AG04449 (cell line): ENCODE measurements at regions of chr7 and their contacts with region 1.

Region 1: GRCh38 chr7:130069978-130070860 is at the start of gene KLHDC10:
- DNase-seq: peak; percentile 96
- H3K4me3 ChIP-seq: peak within 1 kb of the TSS; percentile 77
- CTCF ChIP-seq: no peak

Region 2: GRCh38 chr7:130084037-130084875 is 14.0 kb after region 1 on chr7:
- CTCF ChIA-PET with region 1: interaction called, 44 read pairs
- POLR2A ChIA-PET with region 1: no interaction called
- DNase-seq: no peak
- H3K4me3 ChIP-seq: no peak overlapping the region
- CTCF ChIP-seq: no peak

Region 3: DNA sequence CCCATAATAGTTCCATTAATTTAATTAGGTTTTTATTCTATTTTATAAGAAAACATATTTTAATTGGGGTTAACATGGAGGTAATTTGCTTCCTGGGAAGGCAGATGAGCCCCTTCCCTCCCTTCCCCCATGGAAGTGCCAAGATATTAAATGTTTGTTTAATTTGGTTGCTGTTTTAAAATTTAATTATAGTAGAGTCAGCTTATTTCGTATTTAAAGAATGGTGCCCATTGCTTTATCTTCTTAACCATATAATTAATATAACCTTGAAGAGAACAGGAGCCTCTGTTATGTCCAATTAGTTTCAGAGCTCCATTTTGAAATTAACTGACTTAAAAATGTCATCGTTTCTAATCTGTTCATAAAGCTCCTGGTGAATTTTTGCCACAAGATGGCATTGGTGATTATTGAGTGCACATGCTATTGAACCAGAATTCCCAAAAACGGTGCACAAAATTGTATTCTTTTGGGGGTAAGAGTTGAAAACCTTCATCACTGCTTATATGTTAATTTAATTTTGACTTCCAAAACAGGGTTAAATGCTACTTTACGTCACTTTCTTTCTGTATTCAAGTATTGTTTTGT is 26.1 kb after region 1 on chr7:
- CTCF ChIA-PET with region 1: interaction called, 16 read pairs
- POLR2A ChIA-PET with region 1: no interaction called
- DNase-seq: no peak
- H3K4me3 ChIP-seq: no peak overlapping the region
- CTCF ChIP-seq: peak; percentile 26

Region 4: DNA sequence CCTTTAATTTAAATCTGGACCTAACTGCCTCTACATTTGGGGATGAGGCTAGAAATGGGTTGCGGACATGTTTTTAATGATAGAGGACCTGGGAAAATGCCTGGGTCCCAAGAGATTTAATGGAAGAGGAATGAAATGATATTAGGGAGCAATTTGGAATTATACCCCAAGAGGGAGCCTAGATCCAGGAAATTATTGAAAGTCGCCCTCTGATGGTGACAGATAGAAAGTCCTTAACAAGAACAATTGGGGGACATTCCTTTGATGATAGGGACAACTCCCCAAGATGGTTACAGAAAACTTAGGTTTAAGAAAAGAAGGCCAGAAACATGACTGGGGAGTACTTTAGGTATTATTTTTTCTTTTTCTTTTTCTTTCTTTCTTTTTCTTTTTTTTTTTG is 625.6 kb after region 1 on chr7:
- CTCF ChIA-PET with region 1: interaction called, 11 read pairs
- POLR2A ChIA-PET with region 1: no interaction called
- DNase-seq: no peak
- H3K4me3 ChIP-seq: no peak overlapping the region
- CTCF ChIP-seq: peak; percentile 56

Region 5: DNA sequence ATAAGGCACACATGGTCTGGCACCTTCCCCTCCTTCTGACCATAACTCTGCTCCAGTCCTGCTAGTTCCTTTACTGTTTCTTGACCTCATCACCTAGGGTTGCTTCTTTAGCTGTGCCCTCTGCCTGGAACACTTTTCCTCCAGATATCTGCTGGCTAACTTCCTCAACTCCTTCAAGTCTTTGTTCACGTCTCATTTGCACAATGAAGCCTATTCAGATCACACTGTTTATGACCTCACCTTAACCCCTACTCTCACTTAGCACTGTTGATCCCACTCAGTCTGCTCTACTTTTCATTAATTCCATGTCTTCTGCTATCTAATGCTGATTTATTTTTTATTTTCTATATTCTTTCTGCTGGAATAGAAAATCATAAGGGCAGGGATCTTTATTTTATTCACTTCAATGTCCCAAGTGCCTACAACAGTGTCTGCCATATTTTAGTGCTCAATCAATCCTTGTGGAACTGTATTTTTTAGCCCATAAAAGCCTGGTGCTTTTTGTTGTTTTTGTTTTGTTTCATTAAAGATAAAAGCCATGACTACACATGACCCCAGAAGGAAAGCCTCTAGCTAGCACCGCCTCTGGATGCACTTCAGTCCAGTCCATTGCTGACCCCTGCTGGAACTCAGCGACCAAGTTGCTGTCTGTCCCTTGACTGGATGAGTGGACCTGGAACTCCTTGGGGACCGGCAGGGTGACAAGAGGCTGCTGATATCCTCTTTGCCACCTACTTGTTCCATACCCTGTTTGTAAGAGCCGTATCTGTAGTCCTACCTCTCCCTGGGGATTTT is 651.5 kb after region 1 on chr7:
- CTCF ChIA-PET with region 1: interaction called, 57 read pairs
- POLR2A ChIA-PET with region 1: no interaction called
- DNase-seq: no peak
- H3K4me3 ChIP-seq: no peak overlapping the region
- CTCF ChIP-seq: peak; percentile 66

Region 6: GRCh38 chr7:130758429-130759056 is 688.3 kb after region 1 on chr7:
- CTCF ChIA-PET with region 1: interaction called, 79 read pairs
- POLR2A ChIA-PET with region 1: no interaction called
- DNase-seq: peak; percentile 14
- H3K4me3 ChIP-seq: no peak overlapping the region
- CTCF ChIP-seq: peak; percentile 32

Region 7: GRCh38 chr7:130831817-130832481 is 761.7 kb after region 1 on chr7:
- CTCF ChIA-PET with region 1: interaction called, 26 read pairs
- POLR2A ChIA-PET with region 1: no interaction called
- DNase-seq: no peak
- H3K4me3 ChIP-seq: no peak overlapping the region
- CTCF ChIP-seq: peak; percentile 23